AG04449 (cell line): ENCODE measurements at regions of chr16 and their contacts with region 1.

Region 1: GRCh38 chr16:30775392-30776188 is 11.4 kb downstream of the ZNF629 start:
- DNase-seq: no peak
- H3K4me3 ChIP-seq: peak overlapping the region; percentile 75
- CTCF ChIP-seq: no peak

Region 2: GRCh38 chr16:30747799-30748634 is 27.6 kb before region 1 on chr16 and contains the start of gene PHKG2:
- CTCF ChIA-PET with region 1: no interaction called
- POLR2A ChIA-PET with region 1: interaction called, 10 read pairs
- DNase-seq: peak; percentile 89
- H3K4me3 ChIP-seq: peak within 1 kb of the TSS; percentile 91
- CTCF ChIP-seq: no peak

Region 3: GRCh38 chr16:30761928-30762810 is 13.4 kb before region 1 on chr16 and contains the starts of genes CFAP119 and RNF40:
- CTCF ChIA-PET with region 1: interaction called, 11 read pairs
- POLR2A ChIA-PET with region 1: interaction called, 8 read pairs
- DNase-seq: peak; percentile 88
- H3K4me3 ChIP-seq: peak within 1 kb of the TSS; percentile 96
- CTCF ChIP-seq: no peak